ENCODE measurements at regions of chr3 and their contacts with region 1.

Region 1: DNA sequence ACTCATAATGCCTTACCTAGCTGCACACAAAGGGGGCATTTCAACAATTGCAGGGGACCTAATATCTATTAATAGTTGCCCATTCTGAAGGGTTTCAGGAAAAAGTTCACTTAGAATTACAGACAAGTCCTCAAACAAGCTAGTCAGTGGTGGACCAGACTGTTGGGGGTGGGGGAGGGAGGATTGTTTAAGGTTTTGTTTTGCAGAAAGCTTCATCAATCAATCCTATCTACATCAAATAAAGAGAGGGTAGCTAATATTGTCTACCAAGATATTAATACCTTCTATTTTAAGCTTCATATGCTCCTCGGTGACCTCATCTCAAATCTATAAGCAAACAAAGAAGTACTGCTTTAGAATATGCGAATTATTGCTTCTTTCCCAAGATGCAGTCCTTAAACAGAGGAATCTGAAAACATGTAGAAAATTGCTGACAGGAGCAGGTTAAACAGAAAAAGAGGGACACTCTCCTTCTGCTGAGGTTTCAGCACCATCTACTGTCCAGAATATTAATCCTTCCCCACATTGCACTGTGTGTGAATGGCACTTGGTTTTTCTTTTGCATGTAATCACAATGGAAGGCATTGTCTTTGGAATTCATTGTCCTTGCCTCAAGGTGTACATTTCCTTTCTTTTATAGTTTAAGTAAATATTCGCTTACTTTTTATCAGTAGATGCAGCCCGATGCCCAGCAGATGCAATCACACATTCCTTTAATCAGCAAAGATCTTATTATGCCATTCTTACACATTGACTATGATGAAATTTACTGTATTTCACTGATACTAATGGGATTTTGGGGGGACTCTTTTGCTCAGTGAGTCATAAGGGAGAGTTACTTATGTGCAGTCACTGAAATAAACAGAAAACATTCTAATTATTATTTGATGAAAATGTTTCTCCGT is 94.7 kb downstream of the IL5RA start:
- DNase-seq: no peak

Region 2: DNA sequence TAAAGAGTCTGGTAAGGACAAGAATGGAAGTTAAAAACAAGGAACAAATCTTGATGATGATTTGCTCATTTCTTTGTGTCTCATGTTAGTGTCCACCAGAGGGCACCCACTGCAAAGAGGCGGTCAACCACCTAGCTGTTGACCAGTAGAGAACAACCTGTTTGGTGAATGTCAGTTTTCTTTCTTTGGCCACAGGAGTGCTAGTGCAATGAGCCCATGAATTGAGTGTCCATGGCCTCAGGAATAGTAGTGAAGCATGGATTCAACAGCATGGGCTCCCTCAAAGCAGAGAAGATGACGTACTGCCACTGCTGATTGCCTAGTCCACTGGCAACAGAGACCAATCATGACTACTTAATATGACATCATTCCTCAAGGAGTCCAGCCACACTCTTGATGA is 1933.3 kb before region 1 on chr3:
- intact Hi-C with region 1: loop called (anchors 5 kb)
- DNase-seq: no peak

Region 3: DNA sequence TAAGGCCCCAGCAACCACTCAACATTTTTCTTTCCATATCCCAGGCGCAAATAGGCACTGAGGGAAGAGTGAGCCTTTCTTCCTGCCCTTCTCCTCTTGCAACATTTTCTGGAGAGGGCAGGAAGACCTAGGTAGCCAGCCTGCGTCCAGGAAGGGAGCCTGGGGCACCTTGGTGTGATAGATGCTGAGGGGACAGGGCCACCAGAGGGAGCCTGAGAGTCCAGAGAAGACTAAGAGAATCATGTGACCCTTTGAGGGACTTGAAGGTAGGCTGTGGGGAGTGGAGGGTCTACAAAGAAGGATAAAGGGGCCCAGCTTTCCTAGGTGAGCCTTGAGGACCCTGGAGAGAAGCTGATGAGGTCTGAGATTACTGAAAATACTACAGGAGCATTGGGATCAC is 1576.0 kb before region 1 on chr3:
- intact Hi-C with region 1: loop called (anchors 10 kb)
- DNase-seq: no peak

Region 4: GRCh38 chr3:2823031-2823430 is 192.4 kb before region 1 on chr3:
- intact Hi-C with region 1: no loop called
- DNase-seq: no peak

Measured in cardiac septum (tissue), 1 donor.